Stomach (tissue), 19 donors: ENCODE measurements at regions of chr9 and their contacts with region 1.

Region 1: DNA sequence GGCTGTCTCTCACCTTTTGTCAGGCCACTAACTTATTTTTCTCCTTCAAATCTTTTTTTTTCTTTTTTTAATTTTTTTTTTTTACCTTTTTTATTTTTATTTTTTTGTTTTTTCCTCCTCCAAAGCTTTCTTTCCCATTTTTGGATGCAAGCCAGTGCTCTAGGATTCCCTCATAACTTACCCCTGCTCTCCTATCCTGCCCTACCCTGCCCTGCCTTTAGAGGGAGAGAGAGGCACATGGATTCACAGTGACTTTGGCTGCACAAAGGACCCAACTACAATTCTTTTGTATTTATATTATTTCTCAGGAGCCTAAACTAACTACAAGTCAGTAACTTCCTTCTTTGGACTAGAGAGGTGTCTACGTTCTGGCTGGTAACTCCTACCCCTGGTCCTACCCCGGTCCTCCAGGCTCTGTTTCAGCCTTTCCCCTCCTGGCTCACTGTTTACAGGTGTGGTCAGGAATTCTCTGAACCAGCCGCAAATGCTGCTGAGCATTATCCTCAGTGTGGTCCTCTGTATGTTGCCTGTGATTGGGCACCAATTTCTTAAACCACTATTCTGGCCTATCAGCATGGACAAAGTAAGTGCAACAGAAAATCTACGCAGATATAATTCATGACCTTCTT is 8.4 kb upstream of the RUSC2 start:
- DNase-seq: peak; percentile 66 to 70
- H3K4me3 ChIP-seq: no peak overlapping the region
- H3K27ac ChIP-seq: no peak overlapping the region
- H3K4me1 ChIP-seq: peaks cover 0 to 9% (median 4%) of the 10 kb centered on the region in 4 donors
- H3K27me3 ChIP-seq: no peaks in the 10 kb centered on the region
- CTCF ChIP-seq: peak in 5 of 7 experiments; percentile 63 to 72 (median 67)
- EP300 ChIP-seq: no peak
- POLR2A ChIP-seq: no peak

Region 2: GRCh38 chr9:35341585-35341984 is 139.9 kb before region 1 on chr9:
- intact Hi-C with region 1: no loop called
- DNase-seq: peak; percentile 39 to 78
- H3K4me3 ChIP-seq: peak overlapping the region in 1 of 4 donors; percentile 19
- H3K27ac ChIP-seq: peak overlapping the region in 2 of 5 donors; percentile 3 to 42
- H3K4me1 ChIP-seq: peaks cover 11 to 29% (median 18%) of the 10 kb centered on the region in 4 donors
- H3K27me3 ChIP-seq: no peaks in the 10 kb centered on the region
- CTCF ChIP-seq: no peak
- EP300 ChIP-seq: no peak
- POLR2A ChIP-seq: no peak

Region 3: DNA sequence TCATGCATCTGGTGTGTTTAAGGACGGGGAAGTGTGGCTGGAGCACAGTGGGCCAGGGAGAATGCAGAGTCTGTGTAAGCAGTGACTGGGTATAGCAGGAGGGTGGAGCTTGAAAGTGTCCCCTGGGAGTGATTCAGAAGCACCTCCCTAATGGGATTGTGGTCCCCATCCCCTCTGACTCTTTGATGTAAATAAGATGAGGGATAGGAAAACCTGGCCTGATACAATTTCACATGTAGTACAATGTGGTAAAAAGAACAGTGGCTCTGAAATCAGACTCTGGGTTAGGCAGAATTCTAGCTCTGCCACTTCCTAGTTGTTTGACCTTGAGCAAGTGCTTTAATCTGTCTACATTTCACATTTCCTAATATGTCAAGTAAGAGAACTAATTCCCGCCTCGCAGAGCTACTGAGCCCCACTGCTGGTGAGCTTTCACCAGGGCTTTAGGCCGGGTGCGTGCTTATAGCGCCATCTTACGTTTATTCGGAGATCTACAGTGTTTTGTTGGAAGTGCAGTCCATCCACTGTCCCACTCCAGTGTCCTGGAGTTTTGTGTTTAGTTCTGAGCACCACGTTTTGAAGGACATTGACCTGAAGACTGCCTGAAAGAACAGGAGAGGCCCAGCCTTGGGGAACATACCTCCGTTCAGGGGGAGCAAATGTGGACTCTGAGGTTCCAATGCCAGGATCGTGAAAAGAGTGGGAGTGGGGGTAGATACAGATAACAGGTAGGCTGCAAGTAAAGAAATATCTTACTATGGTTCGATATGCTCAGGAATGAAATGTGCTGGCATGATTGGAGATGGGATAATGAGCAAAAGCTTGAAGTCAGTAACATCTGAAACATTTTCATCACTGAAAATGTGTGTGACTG is 72.4 kb after region 1 on chr9:
- intact Hi-C with region 1: loop called (anchors 5 kb)
- DNase-seq: peak; percentile 64 to 90
- H3K4me3 ChIP-seq: no peak overlapping the region
- H3K27ac ChIP-seq: peak overlapping the region; percentile 14 to 74 (median 54)
- H3K4me1 ChIP-seq: peaks cover 0 to 31% (median 18%) of the 10 kb centered on the region in 4 donors
- H3K27me3 ChIP-seq: no peaks in the 10 kb centered on the region
- CTCF ChIP-seq: peak in 5 of 7 experiments; percentile 57 to 87 (median 77)
- EP300 ChIP-seq: no peak
- POLR2A ChIP-seq: no peak